ENCODE measurements at regions of chr12 and their contacts with region 1.

Region 1: DNA sequence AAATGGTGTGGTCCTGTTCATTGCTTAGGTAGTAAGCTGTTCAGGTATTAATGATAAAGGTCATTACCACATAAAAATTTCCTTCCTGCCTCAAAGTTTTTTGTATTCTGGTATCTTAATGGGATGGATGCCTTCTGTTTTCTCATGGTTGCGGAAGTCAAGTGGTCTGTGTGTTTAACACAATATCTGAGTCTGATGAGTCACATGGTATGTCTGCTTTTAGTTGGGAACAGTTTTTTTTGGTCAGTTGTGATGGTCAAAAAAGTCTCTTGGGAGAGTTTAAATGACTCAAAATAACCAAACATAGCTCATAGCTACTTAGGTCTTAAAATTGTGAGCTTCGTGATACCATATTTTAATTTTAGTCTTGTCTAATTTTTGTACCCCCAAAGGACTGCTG is 40.7 kb downstream of the STK38L start:
- DNase-seq: no peak
- H3K4me3 ChIP-seq: no peak overlapping the region
- H3K4me3 Mint-ChIP-seq: no peak overlapping the region
- H3K27ac Mint-ChIP-seq: no peak overlapping the region
- H3K4me1 ChIP-seq: peaks cover 25% of the 10 kb centered on the region
- H3K4me1 Mint-ChIP-seq: peaks cover 18% of the 10 kb centered on the region
- H3K27me3 ChIP-seq: no peaks in the 10 kb centered on the region
- H3K27me3 Mint-ChIP-seq: no peaks in the 10 kb centered on the region
- CTCF ChIP-seq: no peak

Region 2: DNA sequence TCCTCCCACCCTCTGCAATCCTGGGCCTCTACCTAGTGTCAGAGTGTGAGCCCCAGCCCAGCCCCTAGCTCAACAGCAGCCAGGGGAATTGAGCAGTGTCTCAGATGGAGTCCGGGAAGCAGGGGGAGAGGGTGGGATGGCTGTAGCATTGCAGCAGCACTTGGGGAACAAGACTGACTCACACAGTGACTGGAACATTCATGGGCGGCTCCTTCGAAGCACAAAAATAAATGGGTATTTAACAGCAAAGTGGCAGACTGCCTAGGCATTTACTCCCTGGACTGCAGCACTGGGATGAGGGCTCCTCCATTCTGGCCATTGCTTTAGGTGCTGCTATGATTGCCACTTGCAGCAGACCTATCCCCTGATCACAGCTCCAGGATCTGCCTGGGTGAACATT is 86.7 kb before region 1 on chr12:
- CTCF ChIA-PET with region 1: interaction called, 4 read pairs
- POLR2A ChIA-PET with region 1: no interaction called
- intact Hi-C with region 1: loop called (anchors 5 kb)
- DNase-seq: no peak
- H3K4me3 ChIP-seq: no peak overlapping the region
- H3K4me3 Mint-ChIP-seq: no peak overlapping the region
- H3K27ac Mint-ChIP-seq: no peak overlapping the region
- H3K4me1 ChIP-seq: no peaks in the 10 kb centered on the region
- H3K4me1 Mint-ChIP-seq: no peaks in the 10 kb centered on the region
- H3K27me3 ChIP-seq: no peaks in the 10 kb centered on the region
- H3K27me3 Mint-ChIP-seq: no peaks in the 10 kb centered on the region
- CTCF ChIP-seq: no peak

Region 3: GRCh38 chr12:27237790-27238771 is 46.7 kb before region 1 on chr12:
- CTCF ChIA-PET with region 1: no interaction called
- POLR2A ChIA-PET with region 1: no interaction called
- intact Hi-C with region 1: no loop called
- DNase-seq: no peak
- H3K4me3 ChIP-seq: no peak overlapping the region
- H3K4me3 Mint-ChIP-seq: no peak overlapping the region
- H3K27ac Mint-ChIP-seq: no peak overlapping the region
- H3K4me1 ChIP-seq: no peaks in the 10 kb centered on the region
- H3K4me1 Mint-ChIP-seq: no peaks in the 10 kb centered on the region
- H3K27me3 ChIP-seq: no peaks in the 10 kb centered on the region
- H3K27me3 Mint-ChIP-seq: peaks cover 6% of the 10 kb centered on the region
- CTCF ChIP-seq: no peak